Colonic mucosa (tissue), 4 donors: ENCODE measurements at regions of chr10 and their contacts with region 1.

Region 1: GRCh38 chr10:73886085-73886529 is 11.8 kb upstream of the CAMK2G start:
- DNase-seq: peak; percentile 83
- H3K4me3 ChIP-seq: no peak overlapping the region
- H3K27ac ChIP-seq: peak overlapping the region; percentile 66
- H3K4me1 ChIP-seq: peaks cover 14% of the 10 kb centered on the region
- H3K27me3 ChIP-seq: no peaks in the 10 kb centered on the region
- CTCF ChIP-seq: peak; percentile 79

Region 2: GRCh38 chr10:72692057-72692910 is 1193.8 kb before region 1 on chr10 and contains the start of gene MCU:
- intact Hi-C with region 1: no loop called
- DNase-seq: peak; percentile 98
- H3K4me3 ChIP-seq: peak within 1 kb of the TSS; percentile 71
- H3K27ac ChIP-seq: peak within 1 kb of the TSS; percentile 78
- H3K4me1 ChIP-seq: peaks cover 13% of the 10 kb centered on the region
- H3K27me3 ChIP-seq: no peaks in the 10 kb centered on the region
- CTCF ChIP-seq: no peak
- total RNA-seq, gene MCU: 88.7 to 109 TPM

Region 3: GRCh38 chr10:73609116-73609515 is 277.0 kb before region 1 on chr10:
- intact Hi-C with region 1: no loop called
- DNase-seq: no peak
- H3K4me3 ChIP-seq: no peak overlapping the region
- H3K27ac ChIP-seq: no peak overlapping the region
- H3K4me1 ChIP-seq: no peaks in the 10 kb centered on the region
- H3K27me3 ChIP-seq: no peaks in the 10 kb centered on the region
- CTCF ChIP-seq: no peak

Region 4: GRCh38 chr10:73940634-73941221 is 54.6 kb after region 1 on chr10:
- intact Hi-C with region 1: loop called (anchors 2 kb)
- DNase-seq: peak; percentile 89
- H3K4me3 ChIP-seq: peak overlapping the region; percentile 6
- H3K27ac ChIP-seq: no peak overlapping the region
- H3K4me1 ChIP-seq: peaks cover 7% of the 10 kb centered on the region
- H3K27me3 ChIP-seq: no peaks in the 10 kb centered on the region
- CTCF ChIP-seq: peak; percentile 89

Region 5: DNA sequence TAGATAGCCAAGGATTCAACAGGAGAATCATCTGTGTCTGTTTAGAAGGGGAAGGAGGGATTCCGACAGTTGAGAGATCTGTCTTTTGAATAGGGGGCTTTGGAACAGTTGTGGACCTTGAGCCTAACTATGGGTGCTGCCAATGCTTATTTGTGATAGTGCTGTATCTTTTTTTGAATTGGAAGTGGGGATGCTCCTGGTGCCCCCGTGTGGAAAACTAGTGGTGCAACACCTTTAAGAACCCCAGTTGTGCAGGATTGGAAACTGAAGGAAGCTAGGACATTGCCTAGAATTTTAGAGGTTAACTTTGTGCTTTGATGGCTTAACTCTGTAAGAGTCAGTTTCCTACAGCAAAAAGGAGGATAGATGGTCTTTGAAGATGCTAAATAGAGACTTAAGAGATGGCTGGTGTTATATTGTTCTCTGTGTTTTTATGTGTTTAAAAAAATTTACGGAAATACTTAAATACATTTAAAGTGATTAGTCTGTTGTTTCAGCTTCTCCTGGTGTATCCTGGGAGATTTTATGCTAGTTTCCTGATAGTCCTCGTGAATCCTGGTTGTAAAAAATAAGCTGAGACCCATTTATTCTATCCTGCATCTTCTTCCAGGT is 195.2 kb after region 1 on chr10:
- intact Hi-C with region 1: loop called (anchors 2 kb)
- DNase-seq: peak; percentile 36
- H3K4me3 ChIP-seq: no peak overlapping the region
- H3K27ac ChIP-seq: no peak overlapping the region
- H3K4me1 ChIP-seq: no peaks in the 10 kb centered on the region
- H3K27me3 ChIP-seq: no peaks in the 10 kb centered on the region
- CTCF ChIP-seq: peak; percentile 63

Region 6: DNA sequence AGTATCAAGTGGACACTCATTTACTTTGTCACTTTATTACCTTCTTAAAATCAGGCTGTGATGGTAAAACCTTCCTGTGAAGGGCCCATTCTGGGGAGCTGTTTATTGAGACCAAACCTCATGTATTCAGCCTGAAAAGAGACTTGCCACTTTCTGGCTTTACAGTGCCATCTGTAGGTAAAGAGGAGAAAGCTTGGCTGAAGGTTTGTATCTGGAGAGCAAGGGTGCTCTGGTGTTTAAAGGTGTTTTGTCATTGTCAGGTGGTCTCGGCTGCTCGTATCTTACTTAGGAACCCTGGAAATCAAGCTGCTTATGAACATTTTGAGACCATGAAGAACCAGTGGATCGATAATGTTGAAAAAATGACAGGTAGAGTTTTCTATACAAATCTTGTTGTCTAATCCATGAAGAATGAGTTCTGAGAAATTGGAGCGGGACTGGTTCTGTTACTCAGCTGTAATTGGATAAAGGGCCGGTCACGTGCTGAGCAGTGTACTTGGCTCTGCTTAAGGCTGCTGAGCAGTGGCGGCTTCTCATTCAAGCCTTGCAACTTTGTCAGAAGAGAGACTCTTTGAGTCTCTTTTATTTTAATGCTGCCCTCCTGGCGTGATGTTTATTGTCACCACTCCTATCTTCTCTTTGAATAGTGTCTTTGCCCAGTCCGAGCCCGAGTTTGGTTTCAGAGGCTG is 217.6 kb after region 1 on chr10:
- intact Hi-C with region 1: loop called (anchors 5 kb)
- DNase-seq: no peak
- H3K4me3 ChIP-seq: no peak overlapping the region
- H3K27ac ChIP-seq: no peak overlapping the region
- H3K4me1 ChIP-seq: no peaks in the 10 kb centered on the region
- H3K27me3 ChIP-seq: no peaks in the 10 kb centered on the region
- CTCF ChIP-seq: no peak